SK-N-SH (cell line): ENCODE measurements at regions of chr10 and their contacts with region 1.

Region 1: GRCh38 chr10:122565728-122566206 is 5.2 kb downstream of the DMBT1 start:
- DNase-seq: peak; percentile 61
- H3K4me3 ChIP-seq: no peak overlapping the region; a peak in 1 of 4 replicates
- H3K27ac ChIP-seq: no peak overlapping the region
- H3K4me1 ChIP-seq: peaks cover 0 to 2% of the 10 kb centered on the region in 2 experiments; a peak in 1 of 4 replicates
- H3K27me3 ChIP-seq: 0 out of 2 replicates have a peak, but pooled peaks cover 4% of the 10 kb centered on the region
- CTCF ChIP-seq: peak; percentile 90
- EP300 ChIP-seq: no peak
- RAD21 ChIP-seq: peak; percentile 90

Region 2: DNA sequence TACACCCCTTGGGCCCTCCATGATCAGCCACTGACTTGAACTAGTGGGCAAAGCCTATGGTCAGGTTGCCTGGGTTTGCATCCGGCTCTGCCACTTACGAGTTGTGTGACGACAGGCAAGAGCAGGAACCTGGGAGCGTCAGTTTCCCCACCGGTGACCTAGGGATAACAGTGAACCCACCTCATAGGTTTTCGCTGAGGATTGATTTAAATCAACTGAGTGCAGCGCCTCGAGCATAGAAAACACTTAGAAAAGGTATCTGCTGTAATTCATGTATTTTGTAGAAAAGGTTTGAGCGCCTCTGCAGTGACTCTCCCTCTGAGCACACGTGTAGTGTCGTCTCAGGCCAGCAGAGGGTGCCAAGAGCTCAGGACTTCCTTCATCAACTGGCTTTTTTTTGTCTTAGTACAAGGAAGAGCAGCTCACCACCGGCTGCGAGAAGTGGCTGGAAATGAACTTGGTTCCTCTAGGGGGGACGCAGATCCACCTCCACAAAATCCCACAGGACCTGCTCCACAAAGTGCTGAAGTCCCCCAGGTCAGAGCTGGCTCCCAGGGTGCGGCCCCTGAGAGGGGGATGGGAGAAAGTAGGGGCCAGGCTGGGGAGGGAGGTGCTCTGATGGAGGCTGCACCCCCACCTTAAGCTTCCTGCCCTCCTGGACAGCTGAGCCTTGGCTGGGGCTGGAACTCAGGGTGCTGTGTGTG is 267.0 kb before region 1 on chr10:
- CTCF ChIA-PET with region 1: interaction called, 59 read pairs
- POLR2A ChIA-PET with region 1: no interaction called
- DNase-seq: peak; percentile 80
- H3K4me3 ChIP-seq: peak overlapping the region; percentile 1 to 42; a peak in 2 of 4 replicates
- H3K27ac ChIP-seq: no peak overlapping the region
- H3K4me1 ChIP-seq: no peaks in the 10 kb centered on the region; a peak in 1 of 4 replicates
- H3K27me3 ChIP-seq: no peaks in the 10 kb centered on the region; the same call in 1 of the 2 replicates
- CTCF ChIP-seq: peak; percentile 89
- EP300 ChIP-seq: no peak
- RAD21 ChIP-seq: peak; percentile 95

Region 3: GRCh38 chr10:122307669-122308486 is 257.9 kb before region 1 on chr10:
- CTCF ChIA-PET with region 1: interaction called, 16 read pairs
- POLR2A ChIA-PET with region 1: no interaction called
- DNase-seq: no peak
- H3K4me3 ChIP-seq: peak overlapping the region; percentile 7 to 45; a peak in 3 of 4 replicates
- H3K27ac ChIP-seq: peak overlapping the region; percentile 45 to 88; a peak in 3 of 4 replicates
- H3K4me1 ChIP-seq: peaks cover 0 to 9% of the 10 kb centered on the region in 2 experiments; a peak in 2 of 4 replicates
- H3K27me3 ChIP-seq: no peaks in the 10 kb centered on the region
- CTCF ChIP-seq: no peak
- EP300 ChIP-seq: peak; percentile 50 to 73; a peak in 3 of 4 replicates
- RAD21 ChIP-seq: no peak

Region 4: DNA sequence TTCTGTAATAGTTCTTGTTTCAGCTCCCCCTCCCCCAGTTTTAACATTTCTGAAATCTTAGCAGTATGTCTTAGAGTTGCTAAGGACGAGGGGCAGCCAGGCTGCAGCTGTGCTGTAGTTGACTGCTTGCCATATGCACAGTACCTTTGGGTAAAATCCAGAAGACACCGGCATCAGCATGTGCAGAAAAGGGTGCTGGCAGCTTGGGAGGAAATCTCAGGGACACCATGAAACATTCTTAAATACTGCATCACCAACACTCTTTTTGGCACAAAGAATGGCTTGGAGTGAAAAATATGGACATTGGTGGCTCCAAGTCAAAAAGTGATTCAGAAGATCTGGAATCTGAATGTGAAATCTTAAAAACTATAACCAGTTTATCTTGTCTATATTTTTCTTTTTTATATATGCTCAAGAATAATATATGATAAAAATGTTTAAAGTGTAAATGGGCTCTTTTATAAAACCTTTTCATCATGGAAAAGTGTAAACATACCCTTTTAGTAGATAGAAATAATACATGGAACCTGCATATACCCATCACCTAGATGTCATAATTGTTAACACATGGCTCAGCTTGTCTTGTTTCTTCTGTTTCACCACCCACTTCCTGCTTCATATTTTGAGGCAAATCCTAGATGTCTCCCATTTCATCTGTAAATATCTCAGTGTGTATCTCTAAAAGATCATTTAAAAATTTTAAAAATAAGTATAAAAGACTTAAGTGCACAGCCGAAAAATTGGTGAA is 145.7 kb before region 1 on chr10:
- CTCF ChIA-PET with region 1: interaction called, 13 read pairs
- POLR2A ChIA-PET with region 1: no interaction called
- DNase-seq: no peak
- H3K4me3 ChIP-seq: peak overlapping the region in 1 of 2 experiments; percentile 4; a peak in 1 of 4 replicates
- H3K27ac ChIP-seq: peak overlapping the region; percentile 64 to 83; a peak in 3 of 4 replicates
- H3K4me1 ChIP-seq: peaks cover 11 to 17% of the 10 kb centered on the region in 2 experiments; a peak in 3 of 4 replicates
- H3K27me3 ChIP-seq: no peaks in the 10 kb centered on the region
- CTCF ChIP-seq: no peak
- EP300 ChIP-seq: peak in 1 of 2 experiments; percentile 57; a peak in 1 of 4 replicates
- RAD21 ChIP-seq: no peak

Region 5: GRCh38 chr10:122487174-122487765 is 78.5 kb before region 1 on chr10:
- CTCF ChIA-PET with region 1: no interaction called
- POLR2A ChIA-PET with region 1: no interaction called
- DNase-seq: no peak
- H3K4me3 ChIP-seq: no peak overlapping the region
- H3K27ac ChIP-seq: no peak overlapping the region
- H3K4me1 ChIP-seq: peaks cover 0 to 16% of the 10 kb centered on the region in 2 experiments; a peak in 1 of 4 replicates
- H3K27me3 ChIP-seq: no peaks in the 10 kb centered on the region
- CTCF ChIP-seq: no peak
- EP300 ChIP-seq: no peak
- RAD21 ChIP-seq: no peak

Region 6: DNA sequence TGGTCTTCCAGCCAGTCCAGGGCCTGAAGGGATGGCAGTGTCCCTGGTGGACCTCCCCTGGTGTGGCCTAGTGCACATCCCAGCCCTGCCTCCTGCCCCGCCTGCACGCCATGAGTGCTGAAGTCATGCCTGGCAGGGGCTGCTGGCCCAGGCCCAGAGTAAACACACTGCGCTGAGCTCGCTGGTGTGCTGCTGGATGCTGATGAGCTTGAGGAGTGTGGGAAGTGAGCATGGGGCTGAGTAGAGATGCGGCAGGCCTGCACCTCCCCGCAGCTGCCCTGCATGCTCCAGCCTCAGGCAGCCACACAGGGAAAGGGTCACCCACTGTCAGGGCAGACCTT is 61.2 kb before region 1 on chr10:
- CTCF ChIA-PET with region 1: interaction called, 11 read pairs
- POLR2A ChIA-PET with region 1: no interaction called
- DNase-seq: peak; percentile 84
- H3K4me3 ChIP-seq: no peak overlapping the region
- H3K27ac ChIP-seq: peak overlapping the region; percentile 44 to 74
- H3K4me1 ChIP-seq: peaks cover 7 to 20% of the 10 kb centered on the region in 2 experiments; a peak in 3 of 4 replicates
- H3K27me3 ChIP-seq: no peaks in the 10 kb centered on the region
- CTCF ChIP-seq: no peak
- EP300 ChIP-seq: peak; percentile 26 to 53; a peak in 1 of 4 replicates
- RAD21 ChIP-seq: no peak

Region 7: DNA sequence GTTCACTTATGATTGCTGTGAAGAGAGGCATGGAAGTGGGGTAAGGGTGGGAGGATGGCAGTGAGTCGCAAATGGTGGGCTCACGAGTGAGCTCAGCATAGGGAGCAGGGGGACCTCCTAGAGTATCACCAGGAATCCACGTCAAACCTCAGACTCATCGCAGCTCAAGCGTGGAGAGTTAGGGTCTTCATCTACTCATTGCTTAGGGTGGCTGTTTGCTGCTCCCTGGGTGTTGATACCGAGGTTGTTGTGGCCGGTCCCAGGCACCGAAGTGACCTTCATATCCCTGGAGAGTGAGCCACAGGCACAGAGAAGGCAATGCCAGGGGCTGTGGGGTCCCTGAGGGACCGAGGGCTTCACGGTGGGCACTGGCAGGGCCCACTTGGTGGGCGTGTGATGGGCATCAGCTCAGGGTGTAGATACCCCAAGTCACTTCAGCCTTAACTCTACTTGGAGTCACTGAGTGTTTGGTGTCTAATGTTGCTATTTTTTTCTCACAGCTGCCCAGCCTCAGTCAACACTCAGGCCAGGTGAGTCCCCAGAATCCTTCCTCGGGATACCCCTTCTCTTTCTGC is 11.6 kb after region 1 on chr10:
- CTCF ChIA-PET with region 1: interaction called, 28 read pairs
- POLR2A ChIA-PET with region 1: no interaction called
- DNase-seq: no peak
- H3K4me3 ChIP-seq: no peak overlapping the region
- H3K27ac ChIP-seq: no peak overlapping the region
- H3K4me1 ChIP-seq: no peaks in the 10 kb centered on the region
- H3K27me3 ChIP-seq: peaks cover 12% of the 10 kb centered on the region; the same call in 1 of the 2 replicates
- CTCF ChIP-seq: no peak
- EP300 ChIP-seq: no peak
- RAD21 ChIP-seq: no peak

Region 8: GRCh38 chr10:122655524-122656307 is 89.9 kb after region 1 on chr10:
- CTCF ChIA-PET with region 1: no interaction called
- POLR2A ChIA-PET with region 1: no interaction called
- DNase-seq: no peak
- H3K4me3 ChIP-seq: no peak overlapping the region
- H3K27ac ChIP-seq: no peak overlapping the region
- H3K4me1 ChIP-seq: peaks cover 0 to 4% of the 10 kb centered on the region in 2 experiments; a peak in 1 of 4 replicates
- H3K27me3 ChIP-seq: no peaks in the 10 kb centered on the region
- CTCF ChIP-seq: no peak
- EP300 ChIP-seq: no peak
- RAD21 ChIP-seq: no peak